IMR-90 (cell line): ENCODE measurements at regions of chr16 and their contacts with region 1.

Region 1: GRCh38 chr16:9047686-9048301 is 43.6 kb upstream of the HAPSTR1 start:
- DNase-seq: peak; percentile 99
- ATAC-seq: peak; percentile 89
- H3K4me3 ChIP-seq: no peak overlapping the region
- H3K27ac ChIP-seq: peak overlapping the region; percentile 74
- H3K4me1 ChIP-seq: peaks cover 12% of the 10 kb centered on the region
- H3K27me3 ChIP-seq: no peaks in the 10 kb centered on the region
- CTCF ChIP-seq: no peak
- POLR2A ChIP-seq: no peak; the same call in 1 of the 2 replicates
- RAD21 ChIP-seq: no peak; the same call in 1 of the 2 replicates

Region 2: DNA sequence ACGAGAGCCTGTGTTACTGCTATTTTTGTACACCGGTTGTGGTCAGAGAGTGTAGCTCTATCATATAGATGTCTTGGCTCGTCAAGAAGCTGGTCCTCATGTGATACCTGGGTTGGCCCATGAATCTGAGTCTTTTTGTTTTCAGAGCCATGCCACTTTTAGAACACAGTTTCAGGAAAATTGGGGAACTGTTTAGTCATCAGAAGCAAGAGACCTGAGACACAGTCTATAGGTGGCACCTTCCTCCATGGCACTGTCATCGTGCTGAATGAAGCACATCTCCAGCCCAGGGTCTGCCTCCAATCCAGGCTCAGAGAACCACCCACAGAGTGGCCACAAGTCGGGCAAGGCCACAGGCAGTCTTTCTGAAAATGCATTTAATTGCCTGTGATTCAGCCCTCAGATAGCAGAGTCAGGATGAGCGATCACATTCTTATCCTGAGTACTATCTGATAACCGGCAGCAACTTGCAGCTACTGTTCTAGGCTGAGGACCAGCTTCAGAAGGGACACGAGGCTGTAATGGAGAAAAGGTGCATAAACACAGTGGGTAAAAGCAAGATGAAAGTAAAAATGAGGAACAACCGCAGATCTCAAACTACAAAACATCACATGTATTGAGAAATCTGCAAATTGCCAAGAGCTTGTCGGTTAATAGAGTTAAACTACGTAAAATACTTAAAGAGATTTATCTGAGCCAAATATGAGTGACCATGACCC is 29.5 kb after region 1 on chr16:
- CTCF ChIA-PET with region 1: no interaction called
- POLR2A ChIA-PET with region 1: no interaction called
- dilution Hi-C with region 1: no loop called
- in situ Hi-C with region 1: no loop called
- intact Hi-C with region 1: loop called (anchors 2 kb)
- DNase-seq: peak; percentile 88
- ATAC-seq: peak; percentile 70
- H3K4me3 ChIP-seq: no peak overlapping the region
- H3K27ac ChIP-seq: peak overlapping the region; percentile 19
- H3K4me1 ChIP-seq: peaks cover 20% of the 10 kb centered on the region
- H3K27me3 ChIP-seq: no peaks in the 10 kb centered on the region
- CTCF ChIP-seq: no peak
- POLR2A ChIP-seq: no peak
- RAD21 ChIP-seq: no peak; the same call in 1 of the 2 replicates

Region 3: DNA sequence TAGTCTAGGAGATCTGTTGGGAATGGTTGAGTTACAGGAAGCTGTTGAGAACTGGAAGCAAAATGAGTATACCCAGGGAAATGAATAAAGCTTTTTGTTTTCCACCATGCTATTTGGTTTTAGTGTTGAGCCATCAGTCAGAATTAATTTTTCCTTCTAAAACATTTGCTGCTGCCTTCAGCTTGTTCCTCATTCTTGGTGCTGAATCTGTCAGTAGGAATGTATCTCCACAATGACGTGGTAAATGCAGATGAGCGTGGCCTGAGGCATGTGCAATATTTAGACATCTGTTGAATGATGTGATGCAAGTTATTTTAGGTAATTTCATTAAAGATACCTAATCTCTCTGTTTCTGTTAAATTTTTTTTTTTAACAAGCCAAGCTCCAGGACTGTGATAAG is 54.6 kb after region 1 on chr16:
- CTCF ChIA-PET with region 1: interaction called, 3 read pairs
- POLR2A ChIA-PET with region 1: no interaction called
- dilution Hi-C with region 1: no loop called
- in situ Hi-C with region 1: loop called (anchors 5 kb)
- intact Hi-C with region 1: no loop called
- DNase-seq: peak; percentile 97
- ATAC-seq: peak; percentile 66
- H3K4me3 ChIP-seq: no peak overlapping the region
- H3K27ac ChIP-seq: no peak overlapping the region
- H3K4me1 ChIP-seq: peaks cover 33% of the 10 kb centered on the region
- H3K27me3 ChIP-seq: no peaks in the 10 kb centered on the region
- CTCF ChIP-seq: no peak
- POLR2A ChIP-seq: no peak
- RAD21 ChIP-seq: no peak

Region 4: GRCh38 chr16:9316615-9317014 is 268.8 kb after region 1 on chr16:
- CTCF ChIA-PET with region 1: no interaction called
- POLR2A ChIA-PET with region 1: no interaction called
- dilution Hi-C with region 1: no loop called
- in situ Hi-C with region 1: no loop called
- intact Hi-C with region 1: no loop called
- DNase-seq: no peak
- ATAC-seq: no peak
- H3K4me3 ChIP-seq: no peak overlapping the region
- H3K27ac ChIP-seq: no peak overlapping the region
- H3K4me1 ChIP-seq: no peaks in the 10 kb centered on the region
- H3K27me3 ChIP-seq: no peaks in the 10 kb centered on the region
- CTCF ChIP-seq: no peak
- POLR2A ChIP-seq: no peak
- RAD21 ChIP-seq: no peak